Common myeloid progenitor, CD34-positive (primary cell): ENCODE measurements at regions of chr17 and their contacts with region 1.

Region 1: DNA sequence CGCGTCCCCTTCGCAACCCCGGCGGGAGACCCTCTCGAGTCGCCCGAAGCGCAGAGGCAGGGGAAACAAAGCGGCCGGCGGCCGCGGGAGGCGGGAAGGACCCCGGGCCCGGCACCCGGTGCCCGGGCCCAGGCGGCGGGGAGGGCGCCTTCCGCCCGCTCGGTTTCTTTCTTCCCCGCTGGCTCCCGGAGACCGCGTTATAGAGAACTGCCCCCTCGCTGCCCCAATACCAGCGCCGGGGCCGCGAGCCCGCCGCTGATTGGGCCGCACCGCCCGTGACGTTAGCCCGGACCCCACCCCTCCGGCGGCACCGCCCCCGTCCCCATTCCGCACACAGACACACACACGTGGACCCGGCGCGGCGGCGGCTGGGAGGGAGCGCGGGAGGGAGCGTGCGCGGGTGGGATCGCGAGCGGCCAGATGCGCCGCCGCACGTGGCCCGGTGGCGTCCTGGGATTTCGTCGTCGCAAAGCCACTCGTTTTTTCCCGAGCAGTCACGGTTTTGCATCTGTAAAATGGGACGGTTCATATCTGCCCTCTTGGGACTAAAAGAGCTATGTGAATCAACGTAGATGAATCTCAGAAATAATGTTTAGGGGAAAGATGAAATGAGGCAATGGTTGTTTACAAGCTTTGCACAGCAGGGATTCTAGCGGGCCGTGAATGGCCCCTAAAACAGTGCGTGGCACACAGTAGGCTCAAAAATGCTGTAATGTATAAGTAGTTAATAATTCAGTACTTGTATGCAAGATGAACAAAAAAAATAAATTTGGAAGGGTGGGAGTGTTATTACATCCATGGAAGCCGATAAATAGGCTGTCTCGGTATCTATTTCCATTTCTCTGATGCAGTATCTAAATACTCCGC is at the start of gene EPOP:
- DNase-seq: peak; percentile 71 to 79 (median 76)
- H3K4me3 ChIP-seq: peak within 1 kb of the TSS; percentile 32 to 68 (median 57)
- H3K27ac ChIP-seq: no peak within 1 kb of the TSS
- H3K4me1 ChIP-seq: peaks cover 0 to 35% (median 30%) of the 10 kb centered on the region in 4 experiments
- H3K27me3 ChIP-seq: peaks cover 0 to 64% (median 32%) of the 10 kb centered on the region in 5 experiments

Region 2: DNA sequence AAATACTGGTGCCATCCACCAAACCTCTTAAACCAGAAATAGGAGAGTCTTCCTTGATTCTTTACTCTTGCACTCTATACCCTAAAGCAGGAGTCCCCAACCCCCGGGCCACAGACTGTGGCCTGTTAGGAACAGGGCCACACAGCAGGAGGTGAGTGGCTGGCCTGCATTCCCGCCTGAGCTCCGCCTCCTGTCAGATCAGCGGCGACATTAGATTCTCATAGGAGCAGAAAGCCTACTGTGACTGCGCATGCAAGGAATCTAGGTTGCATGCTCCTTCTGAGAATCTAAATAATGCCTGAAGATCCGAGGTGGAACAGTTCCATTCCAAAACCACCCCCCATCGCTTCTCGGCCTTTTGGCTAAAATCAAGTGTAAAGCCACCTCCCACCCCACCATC is 38.9 kb before region 1 on chr17:
- CTCF ChIA-PET with region 1: no interaction called
- POLR2A ChIA-PET with region 1: no interaction called
- DNase-seq: no peak
- H3K4me3 ChIP-seq: no peak overlapping the region
- H3K27ac ChIP-seq: no peak overlapping the region
- H3K4me1 ChIP-seq: no peaks in the 10 kb centered on the region
- H3K27me3 ChIP-seq: no peaks in the 10 kb centered on the region

Region 3: GRCh38 chr17:38690386-38690785 is 15.4 kb after region 1 on chr17:
- CTCF ChIA-PET with region 1: interaction called, 15 read pairs
- POLR2A ChIA-PET with region 1: no interaction called
- DNase-seq: no peak
- H3K4me3 ChIP-seq: no peak overlapping the region
- H3K27ac ChIP-seq: no peak overlapping the region
- H3K4me1 ChIP-seq: peaks cover 0 to 3% (median 1%) of the 10 kb centered on the region in 4 experiments
- H3K27me3 ChIP-seq: peaks cover 0 to 4% (median 0%) of the 10 kb centered on the region in 5 experiments

Region 4: DNA sequence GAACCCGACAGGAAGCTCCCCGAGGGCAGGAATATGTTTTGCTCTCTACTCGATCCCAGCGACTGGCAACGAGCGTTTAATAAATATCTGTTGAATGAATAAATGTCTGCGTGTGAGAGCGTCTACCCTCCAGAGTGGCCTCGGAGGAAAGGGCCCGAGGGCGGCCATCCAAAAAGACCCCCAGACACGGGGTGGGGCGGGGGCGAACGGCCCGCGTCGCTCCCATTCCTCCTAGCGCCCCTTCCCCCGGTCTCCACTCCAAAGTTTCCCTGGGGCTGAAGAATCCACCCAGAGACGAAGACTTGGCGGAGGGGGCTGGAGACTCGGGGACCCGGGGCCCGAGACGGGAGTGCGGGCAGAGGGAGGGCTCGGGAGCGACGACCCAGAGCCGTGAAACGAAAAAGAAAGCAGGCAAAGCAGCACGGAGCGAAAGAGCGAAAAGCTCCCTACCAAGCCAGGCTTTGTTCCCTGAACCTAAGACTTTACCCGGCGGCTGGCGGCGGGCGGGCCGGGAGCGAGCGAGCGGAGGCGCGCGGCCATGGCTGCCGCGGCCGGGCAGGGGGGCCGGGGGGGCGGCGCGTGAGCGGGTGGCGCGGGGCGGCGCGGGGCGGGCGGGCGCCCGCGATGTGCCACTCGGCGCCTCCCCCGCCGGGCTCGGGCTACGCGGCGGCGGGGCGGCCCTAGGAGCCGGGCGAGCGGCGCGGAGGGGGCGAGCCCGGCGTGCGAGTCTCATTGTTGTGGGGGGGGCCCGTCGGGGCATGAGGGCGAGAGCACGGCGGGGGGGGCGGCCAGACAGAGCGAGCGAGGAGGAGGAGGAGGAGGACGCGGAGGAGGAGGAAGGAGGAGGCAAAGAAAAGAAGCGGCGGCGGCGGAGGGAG is 29.9 kb after region 1 on chr17 and contains the start of gene MLLT6:
- CTCF ChIA-PET with region 1: interaction called, 16 read pairs
- POLR2A ChIA-PET with region 1: interaction called, 4 read pairs
- DNase-seq: peak; percentile 83 to 91 (median 89)
- H3K4me3 ChIP-seq: peak within 1 kb of the TSS; percentile 69 to 96 (median 86)
- H3K27ac ChIP-seq: peak within 1 kb of the TSS; percentile 72 to 86
- H3K4me1 ChIP-seq: peaks cover 4 to 65% (median 48%) of the 10 kb centered on the region in 4 experiments
- H3K27me3 ChIP-seq: no peaks in the 10 kb centered on the region

Region 5: DNA sequence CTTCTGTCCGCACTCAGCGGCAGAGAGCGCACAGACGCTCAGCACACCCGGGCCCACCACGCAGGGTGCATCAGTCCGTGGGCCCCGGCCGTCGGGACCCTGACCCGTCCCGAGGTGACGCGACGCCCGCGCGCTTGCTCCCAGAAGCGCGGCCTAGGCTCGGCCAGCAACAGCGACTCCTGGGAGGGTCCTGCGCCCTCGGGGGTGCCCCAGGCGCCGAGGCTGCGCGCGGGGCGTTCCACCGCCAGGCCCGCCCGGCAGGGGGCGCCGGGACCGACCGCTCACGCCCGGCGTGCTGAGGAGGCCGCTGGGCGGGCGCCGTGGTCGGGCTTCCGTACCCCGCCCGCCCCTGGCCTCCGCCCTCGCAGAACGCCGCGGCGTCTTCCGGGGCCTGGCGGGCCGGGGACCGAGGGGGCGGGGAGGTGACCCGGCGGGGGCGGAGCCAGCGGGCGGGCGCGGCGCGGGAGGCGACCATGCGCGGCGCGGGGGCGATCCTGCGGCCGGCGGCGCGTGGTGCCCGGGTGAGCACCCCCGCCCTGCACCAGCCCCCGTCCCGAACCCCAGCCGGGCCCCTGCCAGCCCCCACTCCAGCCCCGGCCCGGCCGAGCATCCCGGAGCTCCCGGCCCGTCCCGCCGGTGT is 55.0 kb after region 1 on chr17 and contains the start of gene CISD3:
- CTCF ChIA-PET with region 1: interaction called, 80 read pairs
- POLR2A ChIA-PET with region 1: interaction called, 3 read pairs
- DNase-seq: peak; percentile 81 to 89 (median 88)
- H3K4me3 ChIP-seq: peak within 1 kb of the TSS; percentile 50 to 82 (median 67)
- H3K27ac ChIP-seq: peak within 1 kb of the TSS in 1 of 2 experiments; percentile 54
- H3K4me1 ChIP-seq: peaks cover 8 to 50% (median 45%) of the 10 kb centered on the region in 4 experiments
- H3K27me3 ChIP-seq: no peaks in the 10 kb centered on the region

Region 6: GRCh38 chr17:38735161-38735997 is 60.4 kb after region 1 on chr17:
- CTCF ChIA-PET with region 1: interaction called, 80 read pairs
- POLR2A ChIA-PET with region 1: interaction called, 3 read pairs
- DNase-seq: peak; percentile 48 to 66 (median 66)
- H3K4me3 ChIP-seq: no peak overlapping the region
- H3K27ac ChIP-seq: no peak overlapping the region
- H3K4me1 ChIP-seq: peaks cover 3 to 25% (median 20%) of the 10 kb centered on the region in 4 experiments
- H3K27me3 ChIP-seq: peaks cover 0 to 10% (median 0%) of the 10 kb centered on the region in 5 experiments